Naive thymus-derived CD8-positive, alpha-beta T cell (primary cell): ENCODE measurements at regions of chr11 and their contacts with region 1.

Region 1: GRCh38 chr11:63838678-63839507 is at the start of gene MARK2:
- DNase-seq: peak; percentile 99 to 100 (median 100)
- ATAC-seq: peak; percentile 87
- H3K4me3 Mint-ChIP-seq: peak within 1 kb of the TSS; percentile 84 to 97 (median 91)
- H3K27ac Mint-ChIP-seq: peak within 1 kb of the TSS; percentile 87 to 98 (median 92)
- H3K4me1 Mint-ChIP-seq: peaks cover 46 to 60% (median 56%) of the 10 kb centered on the region in 4 donors
- H3K27me3 Mint-ChIP-seq: no peaks in the 10 kb centered on the region
- polyA plus RNA-seq, gene MARK2: 37.0 to 57.0 (median 40.3) TPM

Region 2: GRCh38 chr11:63851364-63851763 is 12.5 kb after region 1 on chr11:
- POLR2A ChIA-PET with region 1: interaction called, 14 read pairs
- DNase-seq: peak in 2 of 10 donors; percentile 15 to 25
- ATAC-seq: peak; percentile 34 to 39
- H3K4me3 Mint-ChIP-seq: peak overlapping the region; percentile 45 to 87 (median 71)
- H3K27ac Mint-ChIP-seq: peak overlapping the region; percentile 42 to 95 (median 90)
- H3K4me1 Mint-ChIP-seq: peaks cover 34 to 80% (median 72%) of the 10 kb centered on the region in 4 donors
- H3K27me3 Mint-ChIP-seq: no peaks in the 10 kb centered on the region

Region 3: DNA sequence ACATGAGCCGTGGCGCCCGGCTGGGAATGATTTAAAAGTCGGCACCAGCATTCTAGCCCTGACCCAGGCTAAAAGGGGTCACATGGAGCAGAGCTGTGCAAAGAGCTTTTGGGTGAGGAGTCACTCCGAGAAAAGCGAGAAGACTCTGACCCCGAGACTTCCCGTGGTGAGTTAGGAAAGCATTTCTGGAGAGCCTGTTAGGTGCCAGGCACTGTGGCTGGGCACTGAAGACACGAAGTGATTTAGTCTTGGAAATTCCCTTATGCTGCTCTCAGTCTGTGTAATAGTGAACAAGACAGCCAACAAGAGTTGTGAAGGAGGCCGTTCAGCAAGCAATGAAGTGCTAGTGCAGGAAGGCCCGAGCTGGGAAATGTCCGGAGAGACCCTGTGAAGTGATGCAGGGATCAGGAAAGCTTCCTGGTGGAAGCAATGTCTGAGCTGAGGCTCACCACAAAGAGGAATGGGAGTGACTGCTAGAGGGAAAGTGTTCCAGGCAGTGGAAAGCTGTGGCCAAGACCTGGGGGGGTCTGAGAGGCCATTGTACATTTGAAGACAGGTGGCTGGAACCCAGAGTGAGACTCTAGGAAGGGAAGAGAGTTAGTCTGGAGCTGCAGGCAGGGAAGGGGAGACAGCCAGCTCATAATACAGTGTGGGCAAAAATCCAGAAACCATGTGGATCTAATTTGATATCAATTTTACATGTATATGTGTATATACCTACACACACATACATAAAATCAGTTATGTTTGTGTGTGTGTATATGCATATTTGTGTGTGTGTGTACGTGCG is 31.7 kb after region 1 on chr11:
- POLR2A ChIA-PET with region 1: interaction called, 22 read pairs
- DNase-seq: no peak
- ATAC-seq: no peak
- H3K4me3 Mint-ChIP-seq: peak overlapping the region; percentile 45 to 89 (median 80)
- H3K27ac Mint-ChIP-seq: peak overlapping the region; percentile 82 to 97 (median 90)
- H3K4me1 Mint-ChIP-seq: peaks cover 52 to 91% (median 90%) of the 10 kb centered on the region in 4 donors
- H3K27me3 Mint-ChIP-seq: no peaks in the 10 kb centered on the region

Region 4: DNA sequence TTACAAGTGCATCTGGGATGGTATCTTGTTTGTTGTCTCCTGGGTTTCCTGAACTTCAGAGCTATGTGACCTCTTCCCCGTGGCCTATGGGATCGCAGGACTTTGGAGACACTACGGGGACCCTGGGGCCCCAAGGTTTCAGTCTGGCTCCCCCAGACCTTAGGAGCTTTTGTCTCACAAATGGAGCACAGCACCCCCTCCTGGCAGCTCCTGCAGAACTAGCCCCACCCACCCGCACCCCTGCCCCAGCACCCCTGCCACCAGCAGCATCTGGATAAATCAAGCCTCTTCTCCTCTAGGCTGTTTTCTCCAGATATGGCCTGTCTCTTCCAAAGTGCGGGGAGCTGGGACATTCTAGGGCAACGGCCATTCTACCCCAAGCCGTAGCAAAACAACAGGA is 67.7 kb after region 1 on chr11:
- POLR2A ChIA-PET with region 1: interaction called, 20 read pairs
- DNase-seq: peak; percentile 42 to 80 (median 56)
- ATAC-seq: peak; percentile 65 to 75
- H3K4me3 Mint-ChIP-seq: no peak overlapping the region
- H3K27ac Mint-ChIP-seq: peak overlapping the region in 3 of 10 donors; percentile 57 to 76 (median 70)
- H3K4me1 Mint-ChIP-seq: peaks cover 0 to 17% (median 6%) of the 10 kb centered on the region in 4 donors
- H3K27me3 Mint-ChIP-seq: no peaks in the 10 kb centered on the region

Region 5: DNA sequence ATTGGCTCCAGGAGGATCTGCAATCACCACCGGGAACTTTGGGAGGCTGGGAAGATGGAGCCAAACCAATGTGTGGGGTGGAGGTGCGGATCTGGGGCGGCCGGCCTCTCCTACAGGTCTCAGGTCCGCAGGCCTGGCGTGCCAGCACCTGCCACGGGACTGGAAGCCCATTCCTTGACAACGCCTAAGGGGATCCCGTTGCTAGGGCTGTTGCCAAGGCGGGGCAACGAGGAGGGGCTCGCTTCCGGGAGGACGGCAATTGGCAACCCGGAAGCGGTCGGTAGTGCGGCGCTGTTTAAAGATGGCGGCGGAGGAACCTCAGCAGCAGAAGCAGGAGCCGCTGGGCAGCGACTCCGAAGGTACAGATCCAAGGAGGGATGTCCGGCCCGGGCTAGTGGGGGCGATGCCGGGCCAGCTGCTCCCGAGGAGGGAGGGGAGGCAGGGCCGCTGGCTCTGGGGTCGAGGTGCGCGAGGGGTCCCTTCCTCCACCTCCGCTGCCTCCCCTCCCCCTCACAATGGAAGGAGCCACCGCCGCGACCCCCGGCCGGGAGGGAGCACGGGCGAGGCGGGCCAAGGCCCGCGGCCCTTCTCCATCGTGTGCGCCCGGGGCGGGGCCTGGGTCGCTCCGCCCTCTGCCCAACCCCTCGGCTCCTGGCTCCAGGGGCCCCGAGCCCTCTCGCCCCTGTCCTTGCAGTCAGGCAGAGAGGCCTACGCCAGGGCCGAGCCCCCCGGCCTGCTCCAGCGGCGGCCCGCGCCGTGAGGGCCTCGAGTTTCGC is 147.5 kb after region 1 on chr11 and contains the start of gene OTUB1:
- POLR2A ChIA-PET with region 1: interaction called, 12 read pairs
- DNase-seq: peak; percentile 75 to 93 (median 84)
- ATAC-seq: peak; percentile 86 to 92
- H3K4me3 Mint-ChIP-seq: peak within 1 kb of the TSS; percentile 95 to 99 (median 98)
- H3K27ac Mint-ChIP-seq: peak within 1 kb of the TSS; percentile 94 to 99 (median 99)
- H3K4me1 Mint-ChIP-seq: peaks cover 19 to 41% (median 34%) of the 10 kb centered on the region in 4 donors
- H3K27me3 Mint-ChIP-seq: no peaks in the 10 kb centered on the region
- polyA plus RNA-seq, gene OTUB1: 109 to 121 (median 115) TPM